Breast epithelium (tissue), 4 donors: ENCODE measurements at regions of chr11 and their contacts with region 1.

Region 1: GRCh38 chr11:30774496-30775232 is 188.5 kb upstream of the MPPED2 start:
- DNase-seq: no peak
- H3K4me3 ChIP-seq: no peak overlapping the region
- H3K27ac ChIP-seq: no peak overlapping the region
- H3K4me1 ChIP-seq: no peaks in the 10 kb centered on the region
- H3K27me3 ChIP-seq: no peaks in the 10 kb centered on the region
- CTCF ChIP-seq: no peak
- POLR2A ChIP-seq: no peak

Region 2: DNA sequence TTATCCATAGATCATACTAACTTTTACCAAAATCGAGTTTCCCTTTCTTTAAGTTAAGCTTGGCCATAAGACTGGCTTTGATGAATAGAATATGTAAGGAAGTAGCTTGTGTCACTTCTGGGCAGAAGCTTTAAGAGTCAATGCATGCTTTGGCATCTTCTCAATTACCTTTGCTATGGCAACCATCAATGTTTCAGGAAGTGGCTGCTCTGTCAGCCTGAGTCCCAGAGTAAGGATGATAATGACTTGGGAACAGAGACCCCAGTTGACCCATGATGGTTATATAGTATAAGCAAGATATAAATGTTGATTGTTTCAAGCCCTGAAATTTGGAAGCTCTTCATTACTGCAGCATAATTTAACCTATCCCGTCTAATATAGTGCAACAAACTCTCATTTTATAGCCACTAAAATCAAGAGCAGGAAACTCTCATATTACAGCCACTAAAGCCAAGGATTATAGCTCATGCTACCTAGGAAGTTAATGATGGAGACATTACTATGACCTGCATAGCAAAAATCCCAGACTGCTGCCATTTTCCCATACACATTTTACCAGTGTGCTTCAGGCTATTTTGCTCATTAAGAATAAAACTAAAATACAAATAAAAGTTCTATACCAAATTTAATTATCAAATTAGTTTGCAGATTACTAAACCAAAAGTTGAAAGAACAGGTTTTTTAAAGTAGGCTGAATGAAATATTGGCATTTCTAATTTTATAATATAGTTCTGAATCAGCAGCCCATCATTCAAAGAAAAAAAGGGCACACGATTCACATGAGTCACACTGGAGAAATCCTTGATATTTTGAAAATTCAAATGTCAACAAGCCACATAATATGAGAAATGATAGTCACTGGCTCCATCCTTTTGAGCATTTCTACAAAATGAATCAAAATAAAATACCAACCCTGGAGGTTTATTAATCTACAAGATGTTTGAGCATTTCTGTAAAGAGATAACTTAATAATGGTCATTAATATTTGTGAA is 520.1 kb before region 1 on chr11:
- intact Hi-C with region 1: loop called (anchors 5 kb)
- DNase-seq: no peak
- H3K4me3 ChIP-seq: no peak overlapping the region
- H3K27ac ChIP-seq: no peak overlapping the region
- H3K4me1 ChIP-seq: no peaks in the 10 kb centered on the region
- H3K27me3 ChIP-seq: peaks cover 0 to 3% of the 10 kb centered on the region in 2 donors
- CTCF ChIP-seq: no peak
- POLR2A ChIP-seq: no peak